ENCODE measurements at regions of chr1 and their contacts with region 1.

Region 1: GRCh38 chr1:227437495-227438008 is 119.3 kb upstream of the CDC42BPA start:
- DNase-seq: peak; percentile 68
- ATAC-seq: peak; percentile 97
- H3K4me3 ChIP-seq: peak overlapping the region; percentile 84
- H3K27ac ChIP-seq: no peak overlapping the region
- H3K4me1 ChIP-seq: no peaks in the 10 kb centered on the region; the same call in 1 of the 2 replicates
- H3K27me3 ChIP-seq: peaks cover 10% of the 10 kb centered on the region; the same call in 1 of the 2 replicates
- CTCF ChIP-seq: peak; percentile 73
- POLR2A ChIP-seq: no peak
- RAD21 ChIP-seq: peak; percentile 84

Region 2: DNA sequence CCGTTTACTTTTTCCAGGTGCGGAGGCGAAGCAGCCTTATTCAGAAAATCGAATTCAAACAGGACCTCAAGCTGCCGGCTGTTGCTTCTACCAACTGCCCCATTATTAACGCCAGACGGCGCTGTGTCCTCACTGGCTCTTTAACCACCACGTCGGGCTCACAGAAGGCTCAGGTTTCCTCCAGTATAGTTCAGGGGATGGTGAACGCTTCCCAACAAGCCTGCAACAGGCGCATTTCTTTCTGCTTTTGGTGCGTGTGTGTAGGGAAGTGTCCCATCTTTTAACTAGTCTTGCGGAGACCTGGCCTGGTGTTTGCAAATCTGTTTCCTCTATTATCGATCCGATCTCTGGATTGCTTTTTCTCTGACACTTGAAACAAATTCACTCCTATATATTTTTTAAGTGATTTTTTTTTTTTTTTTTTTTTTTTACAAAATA is 889.8 kb before region 1 on chr1:
- CTCF ChIA-PET with region 1: no interaction called
- POLR2A ChIA-PET with region 1: no interaction called
- dilution Hi-C with region 1: no loop called
- in situ Hi-C with region 1: no loop called
- intact Hi-C with region 1: loop called (anchors 2 kb)
- DNase-seq: peak; percentile 86
- ATAC-seq: peak; percentile 93
- H3K4me3 ChIP-seq: no peak overlapping the region
- H3K27ac ChIP-seq: no peak overlapping the region
- H3K4me1 ChIP-seq: peaks cover 2% of the 10 kb centered on the region; the same call in 1 of the 2 replicates
- H3K27me3 ChIP-seq: peaks cover 54% of the 10 kb centered on the region
- CTCF ChIP-seq: peak; percentile 94
- POLR2A ChIP-seq: no peak
- RAD21 ChIP-seq: peak; percentile 83

Region 3: GRCh38 chr1:226634166-226634588 is 803.4 kb before region 1 on chr1:
- CTCF ChIA-PET with region 1: no interaction called
- POLR2A ChIA-PET with region 1: no interaction called
- dilution Hi-C with region 1: no loop called
- in situ Hi-C with region 1: loop called (anchors 10 kb)
- intact Hi-C with region 1: loop called (anchors 5 kb)
- DNase-seq: peak; percentile 59
- ATAC-seq: peak; percentile 95
- H3K4me3 ChIP-seq: no peak overlapping the region
- H3K27ac ChIP-seq: no peak overlapping the region
- H3K4me1 ChIP-seq: no peaks in the 10 kb centered on the region
- H3K27me3 ChIP-seq: no peaks in the 10 kb centered on the region; the same call in 1 of the 2 replicates
- CTCF ChIP-seq: peak; percentile 91
- POLR2A ChIP-seq: no peak
- RAD21 ChIP-seq: peak; percentile 97

Region 4: DNA sequence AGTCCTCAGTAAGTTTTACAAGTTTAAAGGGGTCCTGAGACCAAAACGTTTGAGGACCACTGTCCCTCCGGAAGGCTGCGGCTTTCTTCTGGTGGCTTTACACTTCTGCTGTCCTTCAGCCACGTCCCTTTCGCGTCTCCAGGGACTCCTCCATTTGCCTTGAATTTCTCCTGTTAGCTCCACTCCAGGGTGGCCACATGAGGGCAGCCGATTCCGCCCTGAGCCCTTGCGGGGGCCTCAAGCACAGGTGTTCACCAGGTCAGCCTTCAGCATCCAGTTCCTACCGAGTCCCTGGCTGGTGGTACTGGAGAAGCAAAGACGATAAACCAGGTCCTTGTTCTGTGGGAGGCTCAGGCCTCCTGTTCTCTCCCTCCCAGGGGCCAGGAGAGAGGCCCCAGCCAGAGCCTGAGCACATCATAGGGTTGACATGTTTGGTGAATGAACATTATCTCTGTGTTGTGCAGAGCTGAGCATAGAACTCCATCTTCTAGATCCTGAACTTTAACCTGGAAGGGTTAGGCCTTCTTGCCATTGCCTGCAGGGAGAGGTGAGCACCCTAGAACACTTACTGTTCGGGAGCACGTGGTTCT is 524.9 kb before region 1 on chr1:
- CTCF ChIA-PET with region 1: no interaction called
- POLR2A ChIA-PET with region 1: no interaction called
- dilution Hi-C with region 1: no loop called
- in situ Hi-C with region 1: no loop called
- intact Hi-C with region 1: loop called (anchors 2 kb)
- DNase-seq: peak; percentile 6
- ATAC-seq: peak; percentile 59
- H3K4me3 ChIP-seq: no peak overlapping the region
- H3K27ac ChIP-seq: no peak overlapping the region
- H3K4me1 ChIP-seq: no peaks in the 10 kb centered on the region
- H3K27me3 ChIP-seq: no peaks in the 10 kb centered on the region
- CTCF ChIP-seq: peak; percentile 39
- POLR2A ChIP-seq: no peak
- RAD21 ChIP-seq: peak; percentile 49

Region 5: DNA sequence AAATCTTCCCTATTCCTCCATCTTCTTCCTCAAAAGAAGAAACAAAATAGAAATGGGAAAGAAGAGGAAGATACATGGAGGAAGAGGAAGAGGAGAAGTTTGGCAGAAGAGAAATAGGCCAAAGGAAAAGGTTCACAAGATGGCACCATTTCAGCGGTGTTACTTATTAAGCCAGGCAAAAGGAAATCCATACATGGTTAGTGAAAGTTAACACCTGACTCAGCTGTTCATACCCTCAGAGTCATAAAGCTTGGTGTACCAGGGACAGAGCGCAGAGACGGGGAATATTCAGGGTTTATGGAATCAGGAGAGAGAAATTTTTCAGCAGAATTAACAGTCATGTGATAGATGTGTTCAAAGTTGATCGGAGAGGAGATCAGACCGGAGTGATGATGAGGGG is 426.9 kb before region 1 on chr1:
- CTCF ChIA-PET with region 1: no interaction called
- POLR2A ChIA-PET with region 1: no interaction called
- dilution Hi-C with region 1: no loop called
- in situ Hi-C with region 1: no loop called
- intact Hi-C with region 1: loop called (anchors 5 kb)
- DNase-seq: no peak
- ATAC-seq: no peak
- H3K4me3 ChIP-seq: no peak overlapping the region
- H3K27ac ChIP-seq: no peak overlapping the region
- H3K4me1 ChIP-seq: no peaks in the 10 kb centered on the region
- H3K27me3 ChIP-seq: no peaks in the 10 kb centered on the region
- CTCF ChIP-seq: no peak
- POLR2A ChIP-seq: no peak
- RAD21 ChIP-seq: no peak

Region 6: DNA sequence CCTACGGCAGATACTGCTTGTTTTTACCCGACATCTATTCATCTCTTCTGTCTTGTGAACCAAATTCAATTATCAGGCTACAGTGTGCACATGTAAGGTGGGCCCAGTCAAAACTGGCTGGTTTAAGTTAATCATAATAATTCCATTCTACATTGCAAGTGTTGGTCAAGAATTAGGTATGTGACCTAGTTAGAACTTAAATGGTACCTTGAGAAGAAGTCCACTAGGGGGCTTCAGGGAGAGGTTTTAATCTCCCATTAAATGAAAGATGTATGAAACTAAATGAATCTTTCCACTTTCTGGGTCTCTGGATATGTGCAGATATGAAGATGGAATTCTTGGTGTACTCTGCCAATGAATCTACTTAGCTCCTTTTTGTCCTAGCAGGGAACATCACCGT is 306.4 kb before region 1 on chr1:
- CTCF ChIA-PET with region 1: no interaction called
- POLR2A ChIA-PET with region 1: no interaction called
- dilution Hi-C with region 1: no loop called
- in situ Hi-C with region 1: loop called (anchors 25 kb)
- intact Hi-C with region 1: loop called (anchors 2 kb)
- DNase-seq: peak; percentile 54
- ATAC-seq: peak; percentile 59
- H3K4me3 ChIP-seq: no peak overlapping the region
- H3K27ac ChIP-seq: no peak overlapping the region
- H3K4me1 ChIP-seq: peaks cover 2% of the 10 kb centered on the region; the same call in 1 of the 2 replicates
- H3K27me3 ChIP-seq: no peaks in the 10 kb centered on the region
- CTCF ChIP-seq: peak; percentile 59
- POLR2A ChIP-seq: no peak
- RAD21 ChIP-seq: peak; percentile 57

Region 7: GRCh38 chr1:227318003-227318852 is 119.3 kb before region 1 on chr1 and contains the start of gene CDC42BPA:
- CTCF ChIA-PET with region 1: interaction called, 4 read pairs
- POLR2A ChIA-PET with region 1: no interaction called
- dilution Hi-C with region 1: no loop called
- in situ Hi-C with region 1: loop called (anchors 10 kb)
- intact Hi-C with region 1: loop called (anchors 1 kb)
- DNase-seq: peak; percentile 87
- ATAC-seq: peak; percentile 90
- H3K4me3 ChIP-seq: peak within 1 kb of the TSS; percentile 89
- H3K27ac ChIP-seq: peak within 1 kb of the TSS; percentile 86
- H3K4me1 ChIP-seq: no peaks in the 10 kb centered on the region
- H3K27me3 ChIP-seq: no peaks in the 10 kb centered on the region
- CTCF ChIP-seq: no peak
- POLR2A ChIP-seq: no peak; the same call in 1 of the 2 replicates
- RAD21 ChIP-seq: no peak
- total RNA-seq, gene CDC42BPA: 27.8 and 36.4 TPM in 2 replicates

Region 8: GRCh38 chr1:227343727-227344551 is 93.6 kb before region 1 on chr1:
- CTCF ChIA-PET with region 1: no interaction called
- POLR2A ChIA-PET with region 1: no interaction called
- dilution Hi-C with region 1: no loop called
- in situ Hi-C with region 1: no loop called
- intact Hi-C with region 1: no loop called
- DNase-seq: peak; percentile 96
- ATAC-seq: peak; percentile 97
- H3K4me3 ChIP-seq: no peak overlapping the region
- H3K27ac ChIP-seq: peak overlapping the region; percentile 34; the same call in 1 of the 2 replicates
- H3K4me1 ChIP-seq: peaks cover 2% of the 10 kb centered on the region
- H3K27me3 ChIP-seq: no peaks in the 10 kb centered on the region
- CTCF ChIP-seq: no peak
- POLR2A ChIP-seq: no peak
- RAD21 ChIP-seq: no peak

Measured in IMR-90 (cell line).